Activated B cell treated with CpG ODN at 0.5 μM for 24 hours (primary cell): ENCODE measurements at regions of chr22 and their contacts with region 1.

Region 1: GRCh38 chr22:42090596-42091454 is at the start of gene NDUFA6:
- DNase-seq: peak; percentile 93
- ATAC-seq: peak; percentile 88
- H3K4me3 Mint-ChIP-seq: peak within 1 kb of the TSS; percentile 97
- H3K27ac Mint-ChIP-seq: peak within 1 kb of the TSS; percentile 98
- H3K4me1 Mint-ChIP-seq: peaks cover 32% of the 10 kb centered on the region
- H3K27me3 Mint-ChIP-seq: no peaks in the 10 kb centered on the region
- CTCF ChIP-seq: peak; percentile 44
- total RNA-seq, gene NDUFA6: 73.6 and 83.2 TPM in 2 replicates

Region 2: DNA sequence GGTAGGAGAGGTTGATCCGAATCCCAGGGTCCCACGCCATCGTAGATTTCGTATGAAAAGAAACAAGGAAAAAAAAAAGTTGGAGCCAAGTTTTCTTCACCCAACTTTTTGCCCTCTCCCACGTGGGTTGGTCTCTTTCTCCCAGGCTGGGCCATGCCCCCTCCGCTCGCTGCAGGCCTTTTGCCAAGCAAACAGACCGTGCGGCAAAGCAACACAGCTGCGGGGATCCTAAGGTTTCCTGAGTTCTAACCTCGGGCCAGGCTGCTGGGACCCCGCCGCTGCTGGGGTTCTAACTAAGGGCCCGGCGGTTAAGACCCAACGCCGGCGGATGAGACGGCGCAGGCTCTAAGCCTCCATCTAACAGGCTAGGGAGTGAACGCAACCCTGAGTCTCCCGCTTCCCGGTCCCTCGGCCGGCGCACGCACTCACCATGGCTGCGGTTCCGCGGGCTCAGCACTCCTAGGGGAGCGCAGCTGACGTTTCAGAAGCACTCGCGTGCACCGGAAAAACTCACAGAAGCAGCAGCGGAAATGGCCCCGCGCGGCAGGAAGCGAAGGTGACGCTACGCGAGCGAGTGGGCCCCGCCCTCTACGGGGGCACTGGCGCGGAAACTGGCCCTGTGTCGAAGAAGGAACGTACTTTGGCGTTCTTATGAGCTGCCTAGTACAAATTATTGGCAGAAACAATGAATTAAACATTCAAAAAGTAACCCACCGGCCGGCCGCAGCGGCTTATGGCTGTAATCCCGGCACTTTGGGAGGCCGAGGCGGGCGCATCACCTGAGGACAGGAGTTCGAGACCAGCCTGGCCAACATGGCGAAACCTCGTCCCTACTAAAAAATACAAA is 402.2 kb before region 1 on chr22 and contains the start of gene SNU13:
- CTCF ChIA-PET with region 1: no interaction called
- POLR2A ChIA-PET with region 1: interaction called, 13 read pairs
- intact Hi-C with region 1: no loop called
- DNase-seq: peak; percentile 88
- ATAC-seq: peak; percentile 94
- H3K4me3 Mint-ChIP-seq: peak within 1 kb of the TSS; percentile 97
- H3K27ac Mint-ChIP-seq: peak within 1 kb of the TSS; percentile 96
- H3K4me1 Mint-ChIP-seq: peaks cover 28% of the 10 kb centered on the region
- H3K27me3 Mint-ChIP-seq: no peaks in the 10 kb centered on the region
- CTCF ChIP-seq: no peak
- total RNA-seq, gene SNU13: 157 and 165 TPM in 2 replicates

Region 3: DNA sequence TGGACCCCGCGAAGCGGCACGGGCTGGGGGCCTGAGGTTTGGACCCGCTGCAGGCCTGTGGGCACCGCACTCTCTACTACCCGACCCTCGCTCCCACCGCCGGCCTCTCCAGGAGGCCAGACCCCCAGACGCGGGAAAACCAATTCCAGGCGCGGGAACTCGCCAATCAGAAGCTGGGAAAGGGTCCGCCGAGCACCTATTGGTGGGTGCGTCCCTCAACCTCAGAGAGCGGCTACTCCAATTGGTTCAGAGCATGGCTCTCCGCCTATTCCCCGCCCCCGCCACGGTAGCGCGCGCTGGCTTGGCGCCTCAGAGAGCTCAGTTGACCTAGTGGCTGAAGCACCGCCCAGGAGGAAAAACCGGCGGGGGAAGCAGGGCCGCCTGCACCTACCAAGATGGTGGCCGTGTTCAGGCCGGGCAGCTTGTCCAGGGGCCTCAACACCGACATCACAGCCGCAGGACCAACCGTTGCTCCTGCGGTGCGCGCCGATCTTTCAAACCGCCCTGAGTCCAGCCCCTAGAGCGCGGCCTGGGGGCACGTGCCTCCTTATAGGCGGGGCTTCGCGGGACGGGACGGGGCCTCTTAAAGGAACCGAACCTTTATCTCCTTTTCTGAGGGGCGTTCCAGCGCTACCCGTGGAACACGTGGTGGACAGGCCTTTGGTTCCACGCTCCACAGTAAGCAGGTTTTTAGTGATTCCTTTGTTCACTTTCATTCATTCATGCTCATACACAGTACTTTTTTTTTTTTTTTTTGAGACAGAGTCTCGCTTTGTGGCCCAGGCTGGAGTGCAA is 144.0 kb before region 1 on chr22 and contains the start of gene CENPM:
- CTCF ChIA-PET with region 1: no interaction called
- POLR2A ChIA-PET with region 1: interaction called, 10 read pairs
- intact Hi-C with region 1: no loop called
- DNase-seq: peak; percentile 84
- ATAC-seq: peak; percentile 91
- H3K4me3 Mint-ChIP-seq: peak within 1 kb of the TSS; percentile 91
- H3K27ac Mint-ChIP-seq: peak within 1 kb of the TSS; percentile 80
- H3K4me1 Mint-ChIP-seq: peaks cover 52% of the 10 kb centered on the region
- H3K27me3 Mint-ChIP-seq: no peaks in the 10 kb centered on the region
- CTCF ChIP-seq: no peak
- total RNA-seq, gene CENPM: 9.6 and 13.3 TPM in 2 replicates

Region 4: GRCh38 chr22:42070517-42071422 is 20.1 kb before region 1 on chr22 and contains the start of gene NAGA:
- CTCF ChIA-PET with region 1: interaction called, 6 read pairs
- POLR2A ChIA-PET with region 1: interaction called, 27 read pairs
- intact Hi-C with region 1: loop called (anchors 1 kb)
- DNase-seq: peak; percentile 76
- ATAC-seq: peak; percentile 96
- H3K4me3 Mint-ChIP-seq: peak within 1 kb of the TSS; percentile 89
- H3K27ac Mint-ChIP-seq: peak within 1 kb of the TSS; percentile 89
- H3K4me1 Mint-ChIP-seq: peaks cover 32% of the 10 kb centered on the region
- H3K27me3 Mint-ChIP-seq: no peaks in the 10 kb centered on the region
- CTCF ChIP-seq: no peak
- total RNA-seq, gene NAGA: 24.3 and 26.8 TPM in 2 replicates

Region 5: GRCh38 chr22:42269407-42270177 is 178.8 kb after region 1 on chr22:
- CTCF ChIA-PET with region 1: interaction called, 3 read pairs
- POLR2A ChIA-PET with region 1: no interaction called
- intact Hi-C with region 1: loop called (anchors 1 kb)
- DNase-seq: peak; percentile 60
- ATAC-seq: peak; percentile 55
- H3K4me3 Mint-ChIP-seq: peak overlapping the region; percentile 82
- H3K27ac Mint-ChIP-seq: peak overlapping the region; percentile 79
- H3K4me1 Mint-ChIP-seq: peaks cover 34% of the 10 kb centered on the region
- H3K27me3 Mint-ChIP-seq: no peaks in the 10 kb centered on the region
- CTCF ChIP-seq: no peak

Region 6: DNA sequence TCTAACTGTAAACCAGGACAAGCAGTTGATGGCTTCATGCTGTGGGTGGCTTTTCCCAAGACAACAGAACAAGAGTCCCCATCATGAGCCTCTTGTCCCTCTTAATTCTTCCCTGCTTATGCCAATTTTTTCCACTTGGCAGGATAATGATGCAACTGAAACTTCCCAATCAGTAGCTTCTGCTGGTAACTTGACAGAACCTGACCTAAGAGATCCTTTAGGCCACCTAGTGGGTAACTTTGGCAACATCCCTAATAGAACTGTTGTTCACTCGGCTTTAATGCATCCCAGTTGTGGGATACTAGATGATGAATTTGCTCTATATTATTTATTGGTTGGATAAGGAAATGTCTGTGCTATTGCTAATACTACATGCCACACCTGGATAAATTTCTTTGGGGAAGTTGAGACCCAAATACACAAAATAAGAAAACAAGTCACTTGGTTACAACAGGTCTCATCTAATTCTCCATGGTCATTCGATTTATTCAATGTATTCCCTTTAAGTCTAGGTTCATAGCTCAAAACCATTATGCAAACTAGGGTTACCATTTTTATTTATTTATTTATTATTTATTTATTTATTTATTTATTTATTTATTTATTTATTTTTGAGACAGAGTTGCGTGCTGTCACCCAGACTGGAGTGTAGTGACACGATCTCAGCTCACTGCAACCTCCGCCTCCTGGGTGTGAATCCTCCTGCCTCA is 382.8 kb after region 1 on chr22:
- CTCF ChIA-PET with region 1: interaction called, 5 read pairs
- POLR2A ChIA-PET with region 1: no interaction called
- intact Hi-C with region 1: loop called (anchors 1 kb)
- DNase-seq: no peak
- ATAC-seq: peak; percentile 64
- H3K4me3 Mint-ChIP-seq: no peak overlapping the region
- H3K27ac Mint-ChIP-seq: no peak overlapping the region
- H3K4me1 Mint-ChIP-seq: peaks cover 3% of the 10 kb centered on the region
- H3K27me3 Mint-ChIP-seq: peaks cover 3% of the 10 kb centered on the region
- CTCF ChIP-seq: peak; percentile 76